Right lobe of liver (tissue), 6 donors: ENCODE measurements at regions of chr12 and their contacts with region 1.

Region 1: DNA sequence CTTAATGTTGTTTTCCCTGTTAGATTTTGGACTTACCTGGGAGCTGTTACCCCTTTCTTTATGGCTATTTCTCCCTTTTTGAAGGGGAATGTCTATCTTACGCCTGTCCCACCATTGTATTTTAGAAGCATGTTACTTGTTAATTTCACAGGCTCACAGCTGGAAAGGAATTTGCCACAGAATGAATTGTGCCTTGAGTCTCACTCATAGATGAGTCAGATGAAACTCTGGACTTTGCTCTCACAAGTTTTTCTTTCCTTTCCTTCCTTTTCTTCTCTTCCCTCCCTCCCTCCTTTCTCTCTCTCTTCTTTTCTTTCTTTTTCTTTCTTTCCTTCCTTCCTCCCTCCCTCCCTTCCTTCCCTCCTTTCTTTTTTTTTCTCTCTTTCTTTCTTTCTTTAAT is 9.3 kb upstream of the ATF7IP start:
- DNase-seq: no peak
- ATAC-seq: no peak
- H3K4me3 ChIP-seq: no peak overlapping the region
- H3K27ac ChIP-seq: no peak overlapping the region
- H3K4me1 ChIP-seq: no peaks in the 10 kb centered on the region
- H3K27me3 ChIP-seq: no peaks in the 10 kb centered on the region
- CTCF ChIP-seq: no peak
- POLR2A ChIP-seq: no peak

Region 2: GRCh38 chr12:14284184-14284722 is 71.9 kb before region 1 on chr12:
- intact Hi-C with region 1: loop called in 1 of 2 experiments (anchors 10 kb)
- DNase-seq: no peak
- ATAC-seq: peak; percentile 26 to 64 (median 52)
- H3K4me3 ChIP-seq: no peak overlapping the region
- H3K27ac ChIP-seq: no peak overlapping the region
- H3K4me1 ChIP-seq: no peaks in the 10 kb centered on the region
- H3K27me3 ChIP-seq: no peaks in the 10 kb centered on the region
- CTCF ChIP-seq: no peak
- POLR2A ChIP-seq: no peak

Region 3: GRCh38 chr12:14394317-14395073 is 38.3 kb after region 1 on chr12:
- intact Hi-C with region 1: no loop called
- DNase-seq: no peak
- ATAC-seq: peak; percentile 90 to 96 (median 94)
- H3K4me3 ChIP-seq: peak overlapping the region in 2 of 3 donors; percentile 14 to 26
- H3K27ac ChIP-seq: peak overlapping the region; percentile 47 to 67 (median 63)
- H3K4me1 ChIP-seq: peaks cover 0 to 47% (median 0%) of the 10 kb centered on the region in 4 donors
- H3K27me3 ChIP-seq: no peaks in the 10 kb centered on the region
- CTCF ChIP-seq: peak in 2 of 4 donors; percentile 13 to 29
- POLR2A ChIP-seq: peak; percentile 43